ENCODE measurements at regions of chr5 and their contacts with region 1.

Region 1: DNA sequence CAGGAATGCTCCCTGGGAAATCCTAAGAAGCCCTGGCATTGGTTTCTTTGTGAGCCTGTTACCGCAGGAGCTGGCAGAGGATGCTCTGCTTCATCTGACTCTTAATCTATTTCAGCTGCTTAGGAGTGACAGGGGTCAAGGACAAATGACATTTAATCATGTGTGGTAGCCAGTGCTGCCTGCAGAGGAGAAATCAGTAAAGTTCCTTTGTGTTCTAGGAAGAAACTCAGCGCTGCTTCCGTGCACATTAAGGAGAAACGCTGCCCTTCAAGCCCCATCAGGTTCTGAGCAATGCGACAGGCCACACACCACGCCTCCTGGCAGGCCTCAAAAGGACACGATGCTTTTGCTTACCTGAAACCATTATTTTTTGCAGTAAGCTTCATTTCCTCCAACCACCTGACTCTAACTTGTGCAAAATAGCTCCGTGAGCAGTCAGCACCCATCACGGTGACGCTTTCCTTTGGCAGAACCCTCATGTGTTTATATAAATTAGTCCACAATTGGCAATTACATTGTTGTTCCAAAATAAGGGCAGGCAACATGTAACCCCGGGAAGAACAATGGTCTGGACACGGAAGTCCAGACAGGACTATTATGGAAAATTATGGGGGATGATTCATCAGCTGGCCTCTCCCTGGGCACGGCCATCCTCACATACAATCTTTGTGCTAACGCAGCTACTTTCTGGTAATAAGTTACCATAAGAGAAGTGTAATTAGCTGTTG is 387.9 kb upstream of the DAP start:
- DNase-seq: no peak
- H3K4me3 ChIP-seq: no peak overlapping the region
- H3K27ac ChIP-seq: no peak overlapping the region
- H3K4me1 ChIP-seq: no peaks in the 10 kb centered on the region
- H3K27me3 ChIP-seq: no peaks in the 10 kb centered on the region
- CTCF ChIP-seq: no peak
- POLR2A ChIP-seq: no peak

Region 2: DNA sequence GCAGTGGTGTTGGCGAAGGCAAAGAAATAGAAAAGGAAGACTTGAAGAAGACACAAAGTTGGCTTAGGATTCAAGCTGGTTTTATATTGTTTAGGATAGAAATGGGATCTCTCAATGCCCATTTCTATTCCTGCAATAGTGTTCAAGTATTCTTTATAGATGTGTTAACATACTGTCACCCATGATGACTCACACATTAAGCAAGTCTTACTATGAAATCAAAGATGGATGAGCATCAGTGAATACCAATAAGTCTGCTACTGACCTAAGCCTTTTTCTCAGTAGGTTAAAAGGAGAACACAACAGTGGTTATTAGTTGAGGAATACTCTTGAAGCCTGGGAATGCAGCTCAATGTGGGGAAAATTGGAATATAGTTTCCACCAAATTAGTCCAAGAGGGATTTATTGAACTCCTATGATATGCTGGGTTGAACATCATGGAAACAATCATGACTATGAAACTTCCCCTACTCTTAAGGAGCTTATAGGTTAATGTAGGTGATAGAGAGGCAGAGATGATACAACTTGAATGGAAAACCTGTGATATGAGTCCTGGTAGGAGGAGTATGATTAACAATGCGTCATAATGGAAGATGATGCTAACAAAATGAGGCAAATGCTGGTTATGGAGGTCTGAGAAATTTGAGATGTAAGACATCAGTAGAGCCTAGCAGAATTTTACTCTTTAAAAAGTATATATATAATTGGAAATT is 29.2 kb after region 1 on chr5:
- intact Hi-C with region 1: no loop called
- DNase-seq: no peak
- H3K4me3 ChIP-seq: no peak overlapping the region
- H3K27ac ChIP-seq: no peak overlapping the region
- H3K4me1 ChIP-seq: peaks cover 0 to 4% of the 10 kb centered on the region in 2 donors
- H3K27me3 ChIP-seq: no peaks in the 10 kb centered on the region
- CTCF ChIP-seq: no peak
- POLR2A ChIP-seq: no peak

Region 3: GRCh38 chr5:11234501-11234911 is 85.5 kb after region 1 on chr5:
- intact Hi-C with region 1: no loop called
- DNase-seq: no peak
- H3K4me3 ChIP-seq: no peak overlapping the region
- H3K27ac ChIP-seq: no peak overlapping the region
- H3K4me1 ChIP-seq: no peaks in the 10 kb centered on the region
- H3K27me3 ChIP-seq: no peaks in the 10 kb centered on the region
- CTCF ChIP-seq: no peak
- POLR2A ChIP-seq: no peak

Region 4: GRCh38 chr5:12169536-12169935 is 1020.6 kb after region 1 on chr5:
- intact Hi-C with region 1: no loop called
- DNase-seq: no peak
- H3K4me3 ChIP-seq: no peak overlapping the region
- H3K27ac ChIP-seq: no peak overlapping the region
- H3K4me1 ChIP-seq: no peaks in the 10 kb centered on the region
- H3K27me3 ChIP-seq: no peaks in the 10 kb centered on the region
- CTCF ChIP-seq: no peak
- POLR2A ChIP-seq: no peak

Region 5: GRCh38 chr5:12636209-12636608 is 1487.2 kb after region 1 on chr5:
- intact Hi-C with region 1: loop called (anchors 5 kb)
- DNase-seq: no peak
- H3K4me3 ChIP-seq: no peak overlapping the region
- H3K27ac ChIP-seq: no peak overlapping the region
- H3K4me1 ChIP-seq: no peaks in the 10 kb centered on the region
- H3K27me3 ChIP-seq: no peaks in the 10 kb centered on the region
- CTCF ChIP-seq: no peak
- POLR2A ChIP-seq: no peak